HCT116 (cell line): ENCODE measurements at regions of chr2 and their contacts with region 1.

Region 1: GRCh38 chr2:108855194-108855593 is 68.6 kb downstream of the CCDC138 start:
- DNase-seq: no peak
- ATAC-seq: peak; percentile 74
- H3K4me3 ChIP-seq: no peak overlapping the region
- H3K27ac ChIP-seq: no peak overlapping the region
- H3K4me1 ChIP-seq: no peaks in the 10 kb centered on the region
- H3K27me3 ChIP-seq: no peaks in the 10 kb centered on the region
- CTCF ChIP-seq: peak in 2 of 3 experiments; percentile 46 to 49; a peak in 4 of 6 replicates
- POLR2A ChIP-seq: no peak
- RAD21 ChIP-seq: peak; percentile 66

Region 2: DNA sequence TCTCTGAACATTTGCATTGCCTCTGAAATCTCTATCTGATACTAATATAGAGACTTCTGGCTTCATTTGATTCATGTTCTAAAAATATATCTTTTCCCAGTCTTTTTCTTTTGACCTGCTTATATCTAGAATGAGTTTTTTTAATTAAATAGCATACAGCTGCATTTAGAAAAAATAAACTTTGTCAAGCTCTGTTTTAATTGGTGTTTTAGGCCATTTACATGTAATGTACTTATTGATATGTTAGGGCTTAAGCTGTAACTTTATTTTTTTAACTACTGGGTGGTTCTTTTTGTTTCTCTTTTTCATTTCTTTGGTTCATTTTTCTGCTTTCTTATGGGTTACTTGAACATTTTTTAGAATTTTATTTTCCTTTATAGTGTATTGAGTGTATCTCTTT is 13.7 kb before region 1 on chr2:
- CTCF ChIA-PET with region 1: no interaction called
- POLR2A ChIA-PET with region 1: no interaction called
- RAD21 ChIA-PET with region 1: no interaction called
- intact Hi-C with region 1: no loop called
- DNase-seq: no peak
- ATAC-seq: no peak
- H3K4me3 ChIP-seq: no peak overlapping the region
- H3K27ac ChIP-seq: no peak overlapping the region
- H3K4me1 ChIP-seq: no peaks in the 10 kb centered on the region
- H3K27me3 ChIP-seq: no peaks in the 10 kb centered on the region
- CTCF ChIP-seq: no peak
- POLR2A ChIP-seq: no peak
- RAD21 ChIP-seq: no peak

Region 3: DNA sequence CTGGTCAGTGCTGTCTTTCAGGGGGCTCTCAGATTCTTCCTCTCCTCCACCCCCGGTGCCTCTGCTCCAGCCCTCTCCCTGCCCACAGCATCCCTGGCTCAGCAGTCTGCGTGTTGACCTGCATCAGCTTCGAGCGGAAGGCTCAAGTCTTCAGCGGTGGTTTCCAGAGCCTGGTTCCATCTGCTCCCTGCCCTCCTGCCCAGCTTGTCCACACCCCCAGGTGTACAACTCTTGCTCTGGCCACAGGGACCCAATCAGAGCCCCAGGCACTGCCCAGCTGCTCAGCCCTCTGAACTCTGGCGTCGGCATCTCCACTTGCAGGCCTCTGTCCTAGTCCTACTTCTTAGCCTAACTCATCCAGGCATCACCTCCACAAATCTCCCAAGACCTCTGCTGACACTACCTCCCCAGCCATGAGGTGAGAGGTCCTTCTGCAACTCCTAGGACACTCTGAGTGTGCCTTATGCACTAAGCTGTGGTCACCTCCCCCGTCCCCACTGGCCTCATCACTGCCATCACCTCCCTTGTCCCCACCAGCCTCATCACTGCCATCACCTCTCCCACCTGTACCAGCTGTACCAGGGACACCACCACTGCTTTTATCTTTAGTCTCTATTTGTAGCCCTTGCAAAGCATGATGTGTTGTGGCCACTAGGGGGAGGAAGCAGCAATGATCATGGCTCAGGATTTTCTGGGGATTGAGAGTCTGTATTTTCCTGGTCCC is 72.9 kb after region 1 on chr2:
- CTCF ChIA-PET with region 1: no interaction called
- POLR2A ChIA-PET with region 1: no interaction called
- RAD21 ChIA-PET with region 1: no interaction called
- intact Hi-C with region 1: loop called (anchors 2 kb)
- DNase-seq: peak; percentile 43
- ATAC-seq: peak; percentile 90
- H3K4me3 ChIP-seq: no peak overlapping the region
- H3K27ac ChIP-seq: no peak overlapping the region
- H3K4me1 ChIP-seq: peaks cover 3 to 8% of the 10 kb centered on the region in 2 experiments; a peak in 3 of 4 replicates
- H3K27me3 ChIP-seq: no peaks in the 10 kb centered on the region
- CTCF ChIP-seq: peak; percentile 77 to 90 (median 87); a peak in 5 of 6 replicates
- POLR2A ChIP-seq: no peak
- RAD21 ChIP-seq: peak; percentile 75

Region 4: GRCh38 chr2:108988796-108989713 is 133.9 kb after region 1 on chr2 and contains the start of gene EDAR:
- CTCF ChIA-PET with region 1: interaction called, 3 read pairs
- POLR2A ChIA-PET with region 1: no interaction called
- RAD21 ChIA-PET with region 1: no interaction called
- intact Hi-C with region 1: loop called (anchors 1 kb)
- DNase-seq: peak; percentile 57
- ATAC-seq: peak; percentile 99
- H3K4me3 ChIP-seq: peak within 1 kb of the TSS; percentile 18 to 26; a peak in 3 of 4 replicates
- H3K27ac ChIP-seq: no peak within 1 kb of the TSS
- H3K4me1 ChIP-seq: peaks cover 0 to 13% of the 10 kb centered on the region in 2 experiments; a peak in 2 of 4 replicates
- H3K27me3 ChIP-seq: peaks cover 8% of the 10 kb centered on the region; the same call in 1 of the 2 replicates
- CTCF ChIP-seq: peak; percentile 71 to 81 (median 76)
- POLR2A ChIP-seq: no peak
- RAD21 ChIP-seq: peak; percentile 91
- total RNA-seq, gene EDAR: 0.15 TPM

Region 5: DNA sequence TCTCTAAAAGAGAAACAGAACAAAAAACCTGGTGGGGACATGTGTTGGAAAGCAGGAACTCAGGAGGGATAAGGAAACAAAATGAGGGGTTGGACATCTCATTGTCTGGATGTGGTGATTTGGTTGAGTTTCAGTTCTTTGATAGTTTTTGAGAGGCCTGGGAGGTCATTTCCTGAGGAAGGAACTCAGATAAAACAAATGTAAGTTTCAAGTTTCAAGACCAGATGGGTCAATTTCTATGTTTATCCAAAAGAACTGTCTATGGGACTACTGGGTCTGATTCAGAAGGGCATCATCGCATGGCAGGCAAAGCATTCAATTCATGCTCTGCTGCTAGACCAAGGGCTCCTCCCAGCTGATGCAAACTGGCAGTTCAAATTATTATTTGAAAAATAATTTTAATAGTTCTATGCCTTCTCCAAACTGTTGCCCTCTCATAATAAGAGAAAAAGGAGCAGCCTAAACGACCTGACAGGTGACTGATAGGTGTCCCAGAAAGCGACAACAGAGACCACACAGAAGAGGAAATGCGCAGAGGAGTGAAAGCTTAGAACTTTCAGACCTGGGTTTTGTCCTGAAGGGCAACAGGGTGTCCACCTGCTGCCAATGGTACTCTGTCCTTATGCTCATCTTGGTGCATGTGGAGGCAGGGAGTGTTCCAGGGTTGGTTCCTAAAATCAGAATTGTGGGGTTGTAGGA is 234.6 kb after region 1 on chr2:
- CTCF ChIA-PET with region 1: no interaction called
- POLR2A ChIA-PET with region 1: no interaction called
- RAD21 ChIA-PET with region 1: no interaction called
- intact Hi-C with region 1: no loop called
- DNase-seq: no peak
- ATAC-seq: no peak
- H3K4me3 ChIP-seq: no peak overlapping the region
- H3K27ac ChIP-seq: no peak overlapping the region
- H3K4me1 ChIP-seq: no peaks in the 10 kb centered on the region
- H3K27me3 ChIP-seq: no peaks in the 10 kb centered on the region
- CTCF ChIP-seq: no peak
- POLR2A ChIP-seq: no peak
- RAD21 ChIP-seq: no peak

Region 6: GRCh38 chr2:109209412-109209811 is 354.2 kb after region 1 on chr2:
- CTCF ChIA-PET with region 1: no interaction called
- POLR2A ChIA-PET with region 1: no interaction called
- RAD21 ChIA-PET with region 1: no interaction called
- intact Hi-C with region 1: loop called (anchors 10 kb)
- DNase-seq: no peak
- ATAC-seq: no peak
- H3K4me3 ChIP-seq: no peak overlapping the region
- H3K27ac ChIP-seq: no peak overlapping the region
- H3K4me1 ChIP-seq: peaks cover 15 to 22% of the 10 kb centered on the region in 2 experiments; a peak in 3 of 4 replicates
- H3K27me3 ChIP-seq: no peaks in the 10 kb centered on the region; the same call in 1 of the 2 replicates
- CTCF ChIP-seq: no peak
- POLR2A ChIP-seq: no peak
- RAD21 ChIP-seq: no peak

Region 7: DNA sequence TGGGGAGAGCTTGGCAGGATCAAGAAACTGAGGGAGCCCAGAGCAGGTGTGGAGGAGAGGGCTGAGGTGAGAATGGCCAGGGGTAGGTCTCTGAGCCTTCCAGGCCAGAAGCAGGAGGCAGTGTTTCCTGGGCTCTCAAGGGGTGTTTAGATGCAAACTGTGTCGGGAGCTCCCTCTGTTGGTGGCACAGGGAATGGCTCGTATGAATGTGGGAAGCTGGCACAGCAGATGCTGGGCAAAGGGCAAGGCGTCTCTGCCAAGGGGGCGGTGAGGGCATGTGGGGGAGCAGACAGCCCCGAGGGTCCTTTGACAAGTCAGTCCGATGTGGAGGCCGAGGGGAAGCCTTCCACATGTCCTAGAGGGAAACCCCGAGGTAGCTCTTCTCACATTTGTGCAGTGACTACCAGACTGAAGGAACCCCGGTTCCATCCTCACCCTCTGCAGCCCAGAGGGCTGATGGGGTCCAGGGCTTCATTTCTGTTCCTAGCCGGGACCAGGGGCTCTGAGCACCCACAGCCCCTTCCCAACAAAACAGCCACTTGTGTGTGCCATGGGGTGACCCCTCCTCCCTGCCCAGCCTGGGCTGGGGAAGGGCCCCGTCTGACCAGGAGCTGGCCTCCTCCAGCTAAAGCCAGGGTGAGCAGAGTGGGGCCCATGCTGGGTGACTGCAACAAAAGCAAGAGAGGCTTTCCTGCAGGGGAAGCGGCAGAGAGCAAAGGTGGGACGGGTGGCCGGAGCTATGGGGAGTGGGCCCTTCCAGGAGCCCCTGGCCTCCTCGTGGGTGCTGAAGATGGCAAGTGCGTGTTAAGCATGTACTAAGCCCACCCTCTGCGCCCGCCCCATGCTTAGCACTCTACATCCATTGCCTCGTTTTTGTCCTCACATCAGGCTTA is 655.2 kb after region 1 on chr2:
- CTCF ChIA-PET with region 1: interaction called, 4 read pairs
- POLR2A ChIA-PET with region 1: no interaction called
- RAD21 ChIA-PET with region 1: no interaction called
- intact Hi-C with region 1: loop called (anchors 5 kb)
- DNase-seq: peak; percentile 50
- ATAC-seq: peak; percentile 93
- H3K4me3 ChIP-seq: no peak overlapping the region
- H3K27ac ChIP-seq: no peak overlapping the region
- H3K4me1 ChIP-seq: no peaks in the 10 kb centered on the region
- H3K27me3 ChIP-seq: no peaks in the 10 kb centered on the region
- CTCF ChIP-seq: peak; percentile 91 to 95 (median 94)
- POLR2A ChIP-seq: no peak
- RAD21 ChIP-seq: peak; percentile 93